Cardiac septum (tissue), 1 donor: ENCODE measurements at regions of chr12 and their contacts with region 1.

Region 1: DNA sequence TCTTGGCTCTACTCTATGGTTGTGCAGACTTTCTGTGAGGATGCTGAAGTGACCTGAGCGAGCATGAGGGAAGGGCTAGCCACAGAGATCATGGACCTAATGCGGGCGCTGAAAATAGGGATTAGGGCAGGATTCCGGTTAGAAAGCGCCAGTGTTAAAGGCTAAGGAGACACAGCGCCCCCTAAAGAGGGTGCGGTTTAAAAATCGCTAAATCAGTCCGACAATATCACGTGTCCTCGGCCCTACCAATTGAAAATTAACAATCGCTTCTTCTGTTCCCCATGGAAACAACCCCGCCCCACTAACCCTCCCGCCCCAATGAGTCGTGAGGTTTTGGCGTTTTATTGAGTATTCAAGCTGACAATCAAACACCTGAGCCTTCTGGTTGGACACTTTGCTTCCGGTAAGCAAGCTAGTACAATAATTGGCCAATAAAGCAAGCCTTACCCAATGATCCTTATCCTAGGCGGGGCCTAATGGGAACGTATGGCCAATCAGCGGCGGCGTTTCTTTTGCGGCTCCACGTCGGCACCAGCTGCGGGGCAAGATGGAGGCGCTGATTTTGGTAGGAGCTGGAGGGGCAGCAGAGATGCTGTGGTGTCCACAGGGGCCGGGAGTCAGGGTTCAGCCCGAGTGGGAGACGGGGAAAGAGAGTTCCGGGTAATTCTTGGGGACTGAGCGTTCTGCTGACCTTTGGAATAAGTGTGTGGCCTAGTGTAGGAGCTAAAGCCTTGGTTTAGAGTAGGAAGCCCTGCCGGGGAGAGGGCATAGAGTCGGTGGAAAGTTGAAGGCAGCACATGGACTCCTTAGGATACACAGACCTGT is at the start of gene COPZ1:
- DNase-seq: peak; percentile 97
- total RNA-seq, gene COPZ1: 106 TPM

Region 2: DNA sequence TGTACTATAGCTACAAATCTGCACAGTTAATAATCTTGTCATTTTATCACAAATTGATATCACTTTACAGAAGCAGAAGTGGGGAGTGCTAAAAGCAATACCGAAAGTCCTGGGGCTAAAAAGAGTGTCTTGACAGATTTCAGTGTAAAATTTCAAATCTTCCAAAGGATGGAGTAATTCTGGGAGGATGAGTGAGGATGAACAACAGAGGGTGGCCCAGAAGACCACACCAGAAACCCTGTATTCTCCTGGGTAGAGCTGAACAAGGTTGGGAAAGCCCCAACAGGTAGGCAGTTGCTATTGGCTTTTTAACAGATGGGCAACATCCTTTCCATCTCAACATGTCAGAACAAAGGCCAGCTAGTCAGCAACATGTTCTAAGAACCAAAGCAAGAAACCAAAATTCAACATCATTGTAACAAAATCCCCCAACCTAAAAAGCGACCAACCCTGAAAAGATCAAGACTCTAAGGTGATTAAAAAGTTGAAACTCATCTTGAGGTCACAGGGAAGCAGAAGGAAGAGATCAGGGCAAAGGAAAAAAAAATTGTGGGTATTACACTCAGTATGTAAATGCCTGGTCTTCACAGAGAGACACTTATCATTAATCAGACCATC is 83.7 kb before region 1 on chr12:
- intact Hi-C with region 1: loop called (anchors 5 kb)
- DNase-seq: no peak

Region 3: GRCh38 chr12:54279866-54280467 is 44.9 kb before region 1 on chr12 and contains the start of gene CBX5:
- intact Hi-C with region 1: loop called (anchors 5 kb)
- DNase-seq: peak; percentile 99
- total RNA-seq, gene CBX5: 39.5 TPM

Region 4: DNA sequence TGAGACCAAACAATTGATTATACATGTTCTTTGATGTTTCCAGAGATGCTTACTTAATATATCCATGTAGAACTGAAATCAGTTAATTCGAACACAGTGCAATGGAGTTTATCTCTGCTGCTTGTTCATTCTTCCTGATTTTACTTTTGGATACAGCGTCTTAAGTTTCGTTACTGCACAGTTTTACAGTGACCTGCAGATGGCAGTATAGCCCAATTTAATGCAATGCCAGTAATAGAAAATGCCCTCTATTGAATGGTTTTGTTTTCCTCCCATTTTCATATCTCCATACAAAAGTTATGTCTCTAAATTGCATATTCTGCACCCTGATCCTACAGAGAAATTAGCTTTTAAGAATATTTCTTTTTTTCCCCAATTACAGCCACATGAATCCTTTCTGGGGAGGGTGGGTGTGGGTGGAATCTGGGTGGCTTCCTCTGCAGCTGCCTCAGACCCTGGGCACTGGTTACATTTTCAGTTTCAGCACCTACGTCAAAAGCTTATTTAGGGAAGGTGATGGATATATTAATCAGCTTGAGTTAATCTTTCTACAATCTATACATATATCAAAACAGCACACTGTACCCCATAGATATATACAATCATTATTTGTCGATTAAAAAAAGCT is 424.5 kb after region 1 on chr12:
- intact Hi-C with region 1: no loop called
- DNase-seq: no peak